ENCODE measurements at regions of chr1 and their contacts with region 1.

Region 1: DNA sequence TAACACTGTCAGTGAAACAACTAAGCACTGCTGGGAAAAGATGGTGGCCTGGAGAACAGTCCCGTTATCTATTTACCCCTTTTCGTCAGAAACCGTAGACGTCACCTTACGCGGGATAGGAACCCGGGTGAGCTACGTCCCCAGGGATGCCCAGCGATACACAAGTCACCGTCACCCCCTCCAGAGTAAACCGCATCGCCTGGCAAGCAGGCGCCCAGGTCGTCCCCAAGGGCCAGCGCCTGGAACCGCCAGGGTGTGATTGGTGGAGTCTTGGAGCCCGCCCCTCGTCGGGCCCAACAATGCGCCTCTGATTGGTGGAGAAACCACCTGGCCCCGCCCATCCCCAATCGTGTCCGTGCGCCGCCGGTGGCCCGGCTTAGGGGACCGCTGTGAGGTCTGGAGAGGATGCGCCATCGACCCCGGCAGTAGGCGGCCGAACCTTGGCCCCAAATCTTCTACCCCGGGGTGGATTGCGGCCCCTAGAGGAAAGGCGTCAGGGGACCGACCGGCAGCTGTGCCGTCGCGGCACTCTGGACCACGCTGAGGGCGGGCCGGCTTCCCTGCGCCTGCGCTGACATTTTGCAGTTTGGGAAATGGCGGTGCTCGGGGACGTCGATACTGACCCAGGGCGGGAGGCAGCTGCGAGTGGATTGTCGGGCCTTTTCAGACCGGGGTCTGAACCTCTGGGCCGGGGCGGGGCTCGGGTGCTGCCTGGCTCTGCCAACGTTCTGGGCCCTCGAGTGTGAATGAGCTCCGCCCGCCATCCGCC is 34.4 kb downstream of the SLC2A1 start:
- DNase-seq: peak; percentile 93
- H3K4me3 Mint-ChIP-seq: peak overlapping the region; percentile 87
- H3K27ac Mint-ChIP-seq: peak overlapping the region; percentile 96
- H3K4me1 Mint-ChIP-seq: peaks cover 55% of the 10 kb centered on the region
- H3K27me3 Mint-ChIP-seq: no peaks in the 10 kb centered on the region

Region 2: GRCh38 chr1:42913426-42914091 is 10.7 kb before region 1 on chr1:
- CTCF ChIA-PET with region 1: interaction called, 19 read pairs
- POLR2A ChIA-PET with region 1: no interaction called
- DNase-seq: peak; percentile 86
- H3K4me3 Mint-ChIP-seq: no peak overlapping the region
- H3K27ac Mint-ChIP-seq: no peak overlapping the region
- H3K4me1 Mint-ChIP-seq: peaks cover 6% of the 10 kb centered on the region
- H3K27me3 Mint-ChIP-seq: peaks cover 3% of the 10 kb centered on the region

Region 3: GRCh38 chr1:42936309-42937078 is 12.2 kb after region 1 on chr1:
- CTCF ChIA-PET with region 1: interaction called, 18 read pairs
- POLR2A ChIA-PET with region 1: no interaction called
- DNase-seq: no peak
- H3K4me3 Mint-ChIP-seq: no peak overlapping the region
- H3K27ac Mint-ChIP-seq: peak overlapping the region; percentile 99
- H3K4me1 Mint-ChIP-seq: peaks cover 96% of the 10 kb centered on the region
- H3K27me3 Mint-ChIP-seq: no peaks in the 10 kb centered on the region

Region 4: GRCh38 chr1:43107664-43108063 is 183.4 kb after region 1 on chr1:
- CTCF ChIA-PET with region 1: no interaction called
- POLR2A ChIA-PET with region 1: no interaction called
- DNase-seq: no peak
- H3K4me3 Mint-ChIP-seq: no peak overlapping the region
- H3K27ac Mint-ChIP-seq: no peak overlapping the region
- H3K4me1 Mint-ChIP-seq: no peaks in the 10 kb centered on the region
- H3K27me3 Mint-ChIP-seq: peaks cover 6% of the 10 kb centered on the region

Measured in activated CD4-positive, alpha-beta T cell treated with anti-CD3 and anti-CD28 coated beads, Interleukin-2, amount 10 ng/mL, durations not matched to agents 7 days and 5 days (primary cell).